ENCODE measurements at regions of chr11 and their contacts with region 1.

Region 1: DNA sequence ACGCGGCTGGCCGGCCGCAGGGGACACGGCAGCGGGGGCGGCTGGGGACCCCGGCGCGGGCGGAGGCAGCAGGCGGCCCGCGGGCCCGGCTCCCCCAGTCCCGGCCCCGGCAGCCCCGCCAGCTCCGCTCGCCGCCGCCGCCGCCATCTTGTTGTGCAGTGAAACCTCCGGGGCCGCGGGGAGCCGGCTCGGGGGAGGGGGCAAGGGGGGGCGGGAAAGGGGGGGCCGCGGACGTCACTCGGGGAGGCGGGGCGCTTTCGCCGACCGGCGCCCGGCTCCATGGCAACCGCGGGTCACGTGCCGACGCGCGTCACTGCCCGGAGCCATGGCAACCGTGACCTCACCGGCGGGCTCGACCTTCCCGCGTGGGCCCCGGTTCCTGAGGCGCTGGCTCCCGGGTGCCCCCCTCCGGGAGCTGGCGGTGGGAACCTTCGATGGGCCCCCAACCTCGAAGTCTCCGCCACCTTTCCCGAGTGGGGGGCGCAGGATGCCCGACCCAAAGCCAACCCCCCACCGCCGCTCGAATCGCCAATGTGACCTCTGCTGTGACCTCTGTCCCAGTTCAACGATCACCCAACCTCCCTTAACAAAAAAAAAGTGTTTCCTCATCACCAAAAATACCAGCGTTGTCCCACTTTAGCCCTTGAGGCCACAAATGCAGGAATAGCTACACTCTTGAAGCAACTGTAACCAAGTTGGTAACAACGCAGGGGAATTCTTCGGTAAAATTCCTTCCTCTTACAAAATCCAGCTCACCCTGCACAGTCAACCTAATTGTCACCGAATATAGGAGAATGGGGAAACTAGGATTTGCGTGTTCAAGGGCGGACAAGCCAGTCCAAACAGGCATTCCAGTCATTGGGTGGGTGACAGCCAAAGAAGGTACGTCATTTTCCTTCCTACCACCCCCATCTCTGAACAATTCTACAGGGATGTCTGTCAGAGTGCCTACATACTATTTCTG is at the start of gene SIK3:
- DNase-seq: peak; percentile 90
- ATAC-seq: peak; percentile 65
- H3K4me3 Mint-ChIP-seq: peak within 1 kb of the TSS; percentile 92
- H3K27ac Mint-ChIP-seq: peak within 1 kb of the TSS; percentile 95
- H3K4me1 Mint-ChIP-seq: peaks cover 40% of the 10 kb centered on the region
- H3K27me3 Mint-ChIP-seq: no peaks in the 10 kb centered on the region
- CTCF ChIP-seq: no peak
- total RNA-seq, gene SIK3: 26.4 to 34.4 TPM (median 29.6 TPM) in 3 replicates

Region 2: GRCh38 chr11:116879800-116880625 is 218.5 kb before region 1 on chr11:
- CTCF ChIA-PET with region 1: interaction called, 11 read pairs
- POLR2A ChIA-PET with region 1: no interaction called
- DNase-seq: no peak
- ATAC-seq: peak; percentile 85
- H3K4me3 Mint-ChIP-seq: no peak overlapping the region
- H3K27ac Mint-ChIP-seq: peak overlapping the region; percentile 11; the same call in 1 of the 2 replicates
- H3K4me1 Mint-ChIP-seq: peaks cover 3% of the 10 kb centered on the region; the same call in 1 of the 2 replicates
- H3K27me3 Mint-ChIP-seq: no peaks in the 10 kb centered on the region
- CTCF ChIP-seq: no peak

Region 3: DNA sequence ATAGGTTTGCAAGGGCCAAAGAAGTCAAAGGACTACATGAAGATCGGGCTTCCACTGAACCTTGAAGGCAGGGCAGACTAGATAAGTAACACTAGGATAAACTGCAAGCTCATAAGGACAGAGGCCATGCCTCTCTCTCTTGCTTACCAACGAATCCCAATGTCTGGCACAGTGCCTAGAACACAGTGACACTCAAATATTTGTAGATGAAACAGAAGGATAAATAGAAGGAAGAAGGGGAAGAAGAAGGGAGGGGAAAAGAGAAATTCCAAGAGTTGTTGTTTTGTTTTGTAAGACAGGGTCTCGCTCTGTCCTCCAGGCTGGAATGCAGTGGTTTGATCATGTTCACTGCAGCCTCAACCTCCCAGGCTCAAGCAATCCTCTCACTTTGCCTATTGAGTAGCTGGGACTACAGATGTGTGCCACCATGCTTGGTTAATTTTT is 27.2 kb before region 1 on chr11:
- CTCF ChIA-PET with region 1: no interaction called
- POLR2A ChIA-PET with region 1: no interaction called
- DNase-seq: no peak
- ATAC-seq: no peak
- H3K4me3 Mint-ChIP-seq: no peak overlapping the region
- H3K27ac Mint-ChIP-seq: peak overlapping the region; percentile 67
- H3K4me1 Mint-ChIP-seq: peaks cover 21% of the 10 kb centered on the region
- H3K27me3 Mint-ChIP-seq: no peaks in the 10 kb centered on the region
- CTCF ChIP-seq: no peak

Region 4: DNA sequence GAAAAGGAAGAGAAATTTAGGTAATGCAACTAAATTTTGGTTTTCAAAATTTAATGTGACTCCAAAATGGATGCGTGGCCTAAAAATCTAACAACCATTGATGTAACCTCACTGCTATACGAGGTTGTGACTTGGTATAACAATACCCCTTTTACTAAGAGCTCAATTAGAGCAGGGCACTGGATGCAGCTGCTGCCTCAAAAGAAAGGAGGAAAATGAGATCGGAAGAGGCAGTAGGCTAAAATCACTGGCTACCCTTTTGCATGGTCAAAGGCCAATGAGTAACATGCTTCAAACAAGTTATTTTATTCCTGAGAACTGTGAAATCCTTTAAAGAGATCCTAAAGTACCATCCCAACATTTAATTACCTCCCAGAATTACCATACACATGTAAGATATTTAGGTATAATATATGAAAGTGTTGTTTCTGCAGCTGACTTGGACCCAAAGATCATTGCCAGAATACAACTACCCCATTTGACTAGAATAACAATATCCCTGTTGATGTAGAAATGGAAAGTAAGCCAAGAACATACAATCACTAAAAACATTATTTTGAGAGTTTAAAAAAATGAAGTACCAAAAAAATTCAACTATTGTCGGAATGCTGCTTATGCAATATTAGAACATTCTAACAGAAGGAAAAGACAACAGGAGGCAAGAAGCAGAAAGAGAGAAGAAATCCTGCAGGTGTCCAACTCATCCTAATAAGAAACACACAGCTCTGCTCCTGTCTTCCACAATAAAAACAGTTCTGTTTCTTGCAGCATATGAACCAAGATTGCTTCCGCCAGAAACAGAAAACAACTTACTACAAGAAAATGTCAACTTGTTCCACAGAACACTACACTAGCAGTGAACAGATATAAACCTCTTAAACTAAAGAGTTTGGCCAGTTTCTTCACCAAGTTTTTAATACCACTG is 15.3 kb before region 1 on chr11:
- CTCF ChIA-PET with region 1: interaction called, 10 read pairs
- POLR2A ChIA-PET with region 1: no interaction called
- DNase-seq: no peak
- ATAC-seq: peak; percentile 39; the same call in 1 of the 2 replicates
- H3K4me3 Mint-ChIP-seq: no peak overlapping the region
- H3K27ac Mint-ChIP-seq: peak overlapping the region; percentile 57
- H3K4me1 Mint-ChIP-seq: peaks cover 34% of the 10 kb centered on the region
- H3K27me3 Mint-ChIP-seq: no peaks in the 10 kb centered on the region
- CTCF ChIP-seq: no peak